ENCODE measurements at regions of chr5 and their contacts with region 1.

Region 1: DNA sequence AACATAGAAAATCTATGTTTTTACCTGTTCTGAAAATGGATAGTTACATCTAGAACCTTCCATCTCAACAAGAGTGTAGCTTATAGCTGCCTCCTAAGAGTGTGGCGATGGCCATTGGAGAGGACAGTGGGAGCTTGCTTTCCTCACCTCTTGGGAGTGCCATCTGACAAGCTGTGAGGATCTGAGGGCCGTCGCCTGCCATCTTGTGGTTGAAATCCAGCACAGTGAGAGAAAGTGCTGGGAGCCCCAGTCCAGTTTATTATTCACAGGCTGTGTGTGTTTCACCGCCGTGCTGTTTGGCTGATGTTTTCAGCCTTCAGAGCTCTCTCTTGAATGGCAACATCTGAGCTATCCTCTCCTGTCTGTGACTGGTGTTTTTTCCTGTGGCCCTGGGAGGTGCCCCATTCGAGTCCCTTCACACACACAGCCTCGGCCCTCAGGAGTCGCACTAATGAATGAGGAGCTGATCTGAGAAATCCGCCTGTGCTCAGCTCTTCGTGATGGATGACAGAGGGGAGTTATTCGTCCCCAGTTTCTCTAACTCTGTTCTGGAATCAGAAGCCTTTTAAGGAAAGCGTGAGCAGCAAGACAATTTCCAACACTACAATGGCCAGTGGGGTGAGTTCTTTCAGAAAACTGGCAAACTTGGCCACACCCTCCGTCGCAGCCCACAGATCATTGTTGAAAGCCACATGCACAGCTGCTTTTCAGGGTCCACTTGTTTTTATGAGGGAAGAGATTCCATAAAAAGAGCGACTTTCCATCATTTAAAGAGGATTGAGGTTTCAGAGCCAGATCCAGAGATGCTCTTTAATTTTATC is 170.3 kb downstream of the PDZD2 start:
- DNase-seq: no peak
- ATAC-seq: peak; percentile 84
- H3K4me3 ChIP-seq: no peak overlapping the region
- H3K27ac ChIP-seq: no peak overlapping the region
- H3K4me1 ChIP-seq: no peaks in the 10 kb centered on the region
- H3K27me3 ChIP-seq: 0 out of 4 replicates have a peak, but pooled peaks cover 0 to 3% of the 10 kb centered on the region in 2 experiments
- CTCF ChIP-seq: peak; percentile 51 to 75 (median 61); a peak in 5 of 6 replicates
- EP300 ChIP-seq: no peak
- POLR2A ChIP-seq: no peak
- RAD21 ChIP-seq: peak; percentile 83

Region 2: DNA sequence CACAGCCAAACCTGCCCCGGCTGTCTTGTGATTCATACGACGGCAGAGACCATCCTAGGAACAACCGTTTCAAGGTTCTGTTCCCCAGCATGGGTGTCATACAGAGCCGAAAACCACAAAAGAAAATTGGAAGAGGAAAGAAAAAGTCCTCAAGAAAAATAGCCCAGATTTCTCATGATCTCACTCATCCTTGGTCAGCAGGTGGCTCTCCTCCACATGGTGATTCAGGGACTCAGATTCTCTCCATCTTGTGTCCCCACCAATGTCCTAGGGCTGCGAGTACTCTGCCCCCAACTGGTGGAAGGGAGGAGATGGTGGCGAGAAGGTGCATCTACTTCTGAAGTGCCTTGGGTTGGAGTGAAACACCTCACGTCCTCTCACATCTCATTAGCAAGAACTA is 144.7 kb before region 1 on chr5:
- CTCF ChIA-PET with region 1: no interaction called
- POLR2A ChIA-PET with region 1: no interaction called
- RAD21 ChIA-PET with region 1: no interaction called
- SMC1A ChIA-PET with region 1: no interaction called
- in situ Hi-C with region 1: no loop called
- intact Hi-C with region 1: loop called (anchors 10 kb)
- DNase-seq: no peak
- ATAC-seq: peak; percentile 64
- H3K4me3 ChIP-seq: no peak overlapping the region
- H3K27ac ChIP-seq: no peak overlapping the region
- H3K4me1 ChIP-seq: no peaks in the 10 kb centered on the region
- H3K27me3 ChIP-seq: no peaks in the 10 kb centered on the region
- CTCF ChIP-seq: peak; percentile 18 to 45 (median 31); a peak in 3 of 6 replicates
- EP300 ChIP-seq: no peak
- POLR2A ChIP-seq: no peak
- RAD21 ChIP-seq: peak; percentile 28

Measured in GM12878 (cell line).